ENCODE measurements at regions of chr18 and their contacts with region 1.

Region 1: DNA sequence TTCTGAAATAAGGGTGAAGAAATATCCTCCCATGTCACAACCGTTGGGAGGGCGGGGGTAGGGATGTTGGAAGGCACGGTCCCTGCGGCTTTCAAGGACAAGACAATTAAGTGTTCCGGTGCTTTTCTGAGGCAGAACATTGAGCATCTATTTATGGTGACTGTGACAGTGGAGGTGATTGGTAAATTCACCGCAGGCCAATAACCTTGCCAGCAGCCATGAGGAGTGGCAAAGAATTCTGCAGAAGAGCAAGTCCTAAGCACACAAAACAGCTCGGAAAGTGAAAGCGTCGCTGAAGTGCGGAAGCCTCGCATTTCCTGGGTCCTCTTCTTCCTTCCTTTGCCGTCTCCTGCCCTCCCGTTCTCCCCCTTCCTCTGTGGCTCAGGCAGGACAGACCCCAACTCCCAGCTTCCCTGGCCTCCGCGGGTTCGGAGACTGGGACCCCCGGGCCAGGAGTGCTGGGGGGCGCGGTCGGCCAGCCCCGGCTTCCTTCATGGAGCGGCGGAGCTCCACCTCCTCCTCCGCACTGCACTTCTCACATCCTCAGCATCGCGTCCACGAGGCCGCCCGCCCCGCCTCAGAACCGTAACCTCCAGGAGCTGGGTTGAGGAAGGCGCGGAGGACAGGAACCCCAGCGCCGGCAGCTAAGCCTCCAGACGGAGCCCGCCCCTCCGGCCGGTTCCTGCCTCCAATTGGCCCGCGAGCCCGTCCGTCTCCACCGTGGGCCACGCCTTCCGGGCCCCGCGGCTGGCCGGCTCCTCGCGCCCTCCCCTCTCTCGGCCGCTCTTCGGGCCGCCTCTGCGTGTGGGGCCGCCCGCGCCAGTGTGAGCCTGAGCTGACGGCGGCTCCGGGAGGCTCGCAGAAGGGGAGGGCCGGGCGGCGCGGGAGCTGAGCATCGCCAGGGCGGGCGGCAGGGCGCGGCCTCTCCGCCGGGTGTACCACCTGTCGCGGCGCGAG is at the start of gene ME2:
- DNase-seq: peak; percentile 87
- H3K4me3 Mint-ChIP-seq: peak within 1 kb of the TSS; percentile 99
- H3K27ac Mint-ChIP-seq: peak within 1 kb of the TSS; percentile 99
- H3K4me1 Mint-ChIP-seq: peaks cover 16% of the 10 kb centered on the region
- H3K27me3 Mint-ChIP-seq: no peaks in the 10 kb centered on the region
- total RNA-seq, gene ME2: 122 and 129 TPM in 2 replicates

Region 2: DNA sequence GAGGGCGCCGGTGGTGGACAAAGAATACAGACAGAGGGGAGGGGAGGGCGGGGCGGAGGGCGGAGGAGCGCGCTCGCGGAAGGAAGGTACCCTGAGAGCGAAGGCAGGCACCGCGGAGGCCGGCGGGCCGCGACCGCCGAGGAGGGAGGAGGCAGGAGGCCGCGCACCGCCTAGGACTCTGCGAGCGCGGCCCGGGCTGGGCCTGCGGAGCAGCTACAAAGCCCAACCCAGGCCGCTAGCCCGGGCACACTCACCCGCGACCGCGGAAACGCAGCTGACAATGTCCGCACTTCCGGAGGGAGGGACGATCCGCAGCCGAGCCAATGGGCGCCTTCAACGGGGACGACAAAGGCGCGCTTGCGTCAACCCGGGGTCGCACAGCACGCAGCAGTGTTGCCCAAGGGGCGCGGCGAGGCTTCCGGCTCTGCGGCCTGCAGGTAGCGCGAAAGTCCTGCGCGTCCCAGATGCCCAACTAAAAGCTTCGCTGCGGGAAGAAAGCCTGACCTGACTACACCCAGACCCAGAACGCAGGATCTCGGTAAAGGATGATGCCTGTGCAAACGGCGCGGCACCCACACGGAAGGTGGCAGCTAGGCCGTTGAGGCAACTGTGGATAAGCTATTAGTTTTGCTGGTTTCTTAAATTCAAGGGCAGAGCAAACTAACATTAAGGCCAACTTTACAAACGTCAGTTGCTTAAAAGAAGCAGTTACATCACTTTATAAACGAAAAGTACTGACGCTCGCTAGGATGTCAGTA is 1391.5 kb before region 1 on chr18 and contains the start of gene C18orf32:
- intact Hi-C with region 1: loop called (anchors 5 kb)
- DNase-seq: peak; percentile 92
- H3K4me3 Mint-ChIP-seq: peak within 1 kb of the TSS; percentile 93
- H3K27ac Mint-ChIP-seq: peak within 1 kb of the TSS; percentile 98
- H3K4me1 Mint-ChIP-seq: peaks cover 53% of the 10 kb centered on the region
- H3K27me3 Mint-ChIP-seq: no peaks in the 10 kb centered on the region
- total RNA-seq, gene C18orf32: 28.7 and 31.2 TPM in 2 replicates

Region 3: GRCh38 chr18:50374753-50375391 is 503.8 kb before region 1 on chr18 and contains the start of gene SKA1:
- intact Hi-C with region 1: loop called (anchors 1 kb)
- DNase-seq: peak; percentile 89
- H3K4me3 Mint-ChIP-seq: peak within 1 kb of the TSS; percentile 91
- H3K27ac Mint-ChIP-seq: peak within 1 kb of the TSS; percentile 81
- H3K4me1 Mint-ChIP-seq: peaks cover 23% of the 10 kb centered on the region
- H3K27me3 Mint-ChIP-seq: peaks cover 2% of the 10 kb centered on the region
- total RNA-seq, gene SKA1: 20.7 and 23.3 TPM in 2 replicates

Region 4: DNA sequence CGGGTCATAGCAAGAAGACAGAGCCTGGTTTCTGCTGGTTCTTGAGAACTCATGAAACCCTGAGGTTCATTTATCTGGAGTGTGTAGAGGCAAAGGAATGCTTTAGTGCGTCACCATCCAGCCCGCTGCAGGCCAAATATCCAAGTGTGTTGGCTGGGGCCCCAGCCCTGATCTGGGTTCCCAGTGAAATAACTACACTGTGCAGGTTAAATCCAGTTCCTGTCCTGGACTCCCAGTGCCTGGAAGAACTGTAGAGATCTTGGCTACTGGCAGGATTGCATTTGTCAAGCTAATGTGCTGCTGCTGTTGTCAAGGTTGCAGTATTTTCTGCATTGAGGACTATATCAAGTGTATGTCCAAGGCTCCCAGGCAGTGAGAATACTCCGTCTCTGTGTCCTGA is 228.8 kb before region 1 on chr18:
- intact Hi-C with region 1: no loop called
- DNase-seq: no peak
- H3K4me3 Mint-ChIP-seq: no peak overlapping the region
- H3K27ac Mint-ChIP-seq: no peak overlapping the region
- H3K4me1 Mint-ChIP-seq: no peaks in the 10 kb centered on the region
- H3K27me3 Mint-ChIP-seq: no peaks in the 10 kb centered on the region

Region 5: GRCh38 chr18:50674307-50674706 is 204.3 kb before region 1 on chr18:
- intact Hi-C with region 1: no loop called
- DNase-seq: no peak
- H3K4me3 Mint-ChIP-seq: no peak overlapping the region
- H3K27ac Mint-ChIP-seq: no peak overlapping the region
- H3K4me1 Mint-ChIP-seq: no peaks in the 10 kb centered on the region
- H3K27me3 Mint-ChIP-seq: peaks cover 3% of the 10 kb centered on the region

Region 6: DNA sequence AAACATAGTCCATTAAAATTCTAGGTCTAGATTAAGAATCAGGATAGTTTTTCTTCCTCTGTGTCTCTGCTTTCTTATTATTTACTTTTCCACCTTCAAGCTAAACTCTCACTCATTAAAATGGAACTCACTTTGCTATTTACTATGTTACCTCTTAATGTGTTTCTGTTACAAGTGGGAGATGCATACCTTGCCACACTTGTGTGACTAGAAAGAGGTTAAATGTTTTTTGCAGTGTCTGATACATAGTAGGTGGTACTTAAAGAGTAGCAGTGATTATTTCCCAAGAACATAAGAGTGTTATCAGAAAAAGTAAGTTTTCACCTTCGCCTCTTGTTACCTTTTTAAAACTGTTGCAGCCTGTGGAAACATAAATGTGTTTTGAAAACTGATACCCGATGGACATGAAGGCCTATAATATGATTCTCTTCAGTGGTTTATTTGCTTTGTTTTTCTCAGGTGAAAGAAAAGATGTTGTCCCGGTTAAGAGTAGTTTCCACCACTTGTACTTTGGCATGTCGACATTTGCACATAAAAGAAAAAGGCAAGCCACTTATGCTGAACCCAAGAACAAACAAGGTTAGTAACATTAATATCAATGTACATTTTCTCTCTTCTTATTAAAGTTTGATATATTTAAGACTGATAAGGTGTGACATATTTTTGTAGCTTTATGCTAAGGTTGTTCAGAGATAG is 16.9 kb after region 1 on chr18:
- intact Hi-C with region 1: loop called (anchors 2 kb)
- DNase-seq: no peak
- H3K4me3 Mint-ChIP-seq: no peak overlapping the region
- H3K27ac Mint-ChIP-seq: no peak overlapping the region
- H3K4me1 Mint-ChIP-seq: peaks cover 14% of the 10 kb centered on the region
- H3K27me3 Mint-ChIP-seq: no peaks in the 10 kb centered on the region

Region 7: GRCh38 chr18:50944245-50944932 is 65.8 kb after region 1 on chr18:
- intact Hi-C with region 1: no loop called
- DNase-seq: no peak
- H3K4me3 Mint-ChIP-seq: no peak overlapping the region
- H3K27ac Mint-ChIP-seq: no peak overlapping the region
- H3K4me1 Mint-ChIP-seq: no peaks in the 10 kb centered on the region
- H3K27me3 Mint-ChIP-seq: no peaks in the 10 kb centered on the region

Region 8: DNA sequence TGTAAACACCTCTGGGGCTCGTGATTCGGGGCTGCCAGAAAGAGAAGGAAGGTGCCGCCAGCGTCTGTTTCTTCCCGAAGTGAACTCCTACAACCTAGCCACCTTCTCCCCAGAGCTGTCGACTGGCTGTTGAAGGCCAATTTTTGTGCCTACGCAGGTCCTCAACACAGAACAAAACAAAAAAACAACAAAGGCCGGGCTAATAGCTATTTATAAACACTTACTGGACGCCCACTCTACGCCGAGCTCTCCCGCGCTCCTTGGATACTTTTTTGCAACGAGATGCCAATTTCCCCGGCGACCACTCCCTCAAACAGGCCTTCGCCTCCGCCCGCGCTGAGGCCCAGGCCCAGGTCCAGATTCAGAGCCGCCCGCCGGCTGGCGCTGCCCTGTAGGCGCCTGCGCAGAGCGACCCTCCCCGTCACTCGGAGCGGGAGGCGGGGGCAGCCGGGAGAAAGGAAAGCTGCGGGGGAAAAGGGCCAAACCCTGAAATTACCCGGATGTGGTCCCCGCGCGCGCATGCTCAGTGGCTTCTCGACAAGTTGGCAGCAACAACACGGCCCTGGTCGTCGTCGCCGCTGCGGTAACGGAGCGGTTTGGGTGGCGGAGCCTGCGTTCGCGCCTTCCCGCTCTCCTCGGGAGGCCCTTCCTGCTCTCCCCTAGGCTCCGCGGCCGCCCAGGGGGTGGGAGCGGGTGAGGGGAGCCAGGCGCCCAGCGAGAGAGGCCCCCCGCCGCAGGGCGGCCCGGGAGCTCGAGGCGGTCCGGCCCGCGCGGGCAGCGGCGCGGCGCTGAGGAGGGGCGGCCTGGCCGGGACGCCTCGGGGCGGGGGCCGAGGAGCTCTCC is 151.3 kb after region 1 on chr18 and contains the start of gene SMAD4:
- intact Hi-C with region 1: loop called (anchors 1 kb)
- DNase-seq: peak; percentile 97
- H3K4me3 Mint-ChIP-seq: peak within 1 kb of the TSS; percentile 99
- H3K27ac Mint-ChIP-seq: peak within 1 kb of the TSS; percentile 96
- H3K4me1 Mint-ChIP-seq: peaks cover 55% of the 10 kb centered on the region
- H3K27me3 Mint-ChIP-seq: no peaks in the 10 kb centered on the region
- total RNA-seq, gene SMAD4: 84.4 and 88.7 TPM in 2 replicates

Region 9: GRCh38 chr18:51153659-51154371 is 275.2 kb after region 1 on chr18:
- intact Hi-C with region 1: loop called (anchors 5 kb)
- DNase-seq: peak; percentile 38
- H3K4me3 Mint-ChIP-seq: peak overlapping the region; percentile 82
- H3K27ac Mint-ChIP-seq: peak overlapping the region; percentile 96
- H3K4me1 Mint-ChIP-seq: peaks cover 48% of the 10 kb centered on the region
- H3K27me3 Mint-ChIP-seq: no peaks in the 10 kb centered on the region

Measured in activated T-helper 1 cell treated with anti-CD3 and anti-CD28 coated beads, Interleukin-12 subunit alpha, Interleukin-12 subunit beta, Interleukin-2, Interleukin-4 antibody, amounts not matched to agents 30 ng/mL and 10 ng/mL and 1 ng/mL, durations not matched to agents 14 hours and 24 hours and 36 hours (primary cell).